Transverse colon (tissue), 4 donors: ENCODE measurements at regions of chr10 and their contacts with region 1.

Region 1: GRCh38 chr10:109883859-109884771 is 39.2 kb downstream of the XPNPEP1 start:
- DNase-seq: peak; percentile 51
- H3K4me3 ChIP-seq: no peak overlapping the region
- H3K27ac ChIP-seq: peak overlapping the region in 3 of 4 donors; percentile 15 to 50 (median 38)
- H3K4me1 ChIP-seq: peaks cover 0 to 13% (median 7%) of the 10 kb centered on the region in 4 donors
- H3K27me3 ChIP-seq: no peaks in the 10 kb centered on the region
- CTCF ChIP-seq: peak; percentile 94 to 96 (median 94)
- EP300 ChIP-seq: no peak
- POLR2A ChIP-seq: no peak

Region 2: GRCh38 chr10:109978481-109978880 is 94.4 kb after region 1 on chr10:
- in situ Hi-C with region 1: loop called in 1 of 4 experiments (anchors 25 kb)
- intact Hi-C with region 1: no loop called
- DNase-seq: peak; percentile 76
- H3K4me3 ChIP-seq: no peak overlapping the region
- H3K27ac ChIP-seq: peak overlapping the region; percentile 72 to 79 (median 76)
- H3K4me1 ChIP-seq: peaks cover 0 to 58% (median 25%) of the 10 kb centered on the region in 4 donors
- H3K27me3 ChIP-seq: no peaks in the 10 kb centered on the region
- CTCF ChIP-seq: peak; percentile 60 to 80 (median 69)
- EP300 ChIP-seq: no peak
- POLR2A ChIP-seq: no peak

Region 3: GRCh38 chr10:110101464-110102144 is 217.5 kb after region 1 on chr10:
- in situ Hi-C with region 1: loop called in 1 of 4 experiments (anchors 25 kb)
- intact Hi-C with region 1: no loop called
- DNase-seq: no peak
- H3K4me3 ChIP-seq: no peak overlapping the region
- H3K27ac ChIP-seq: no peak overlapping the region
- H3K4me1 ChIP-seq: no peaks in the 10 kb centered on the region
- H3K27me3 ChIP-seq: no peaks in the 10 kb centered on the region
- CTCF ChIP-seq: no peak
- EP300 ChIP-seq: no peak
- POLR2A ChIP-seq: no peak

Region 4: DNA sequence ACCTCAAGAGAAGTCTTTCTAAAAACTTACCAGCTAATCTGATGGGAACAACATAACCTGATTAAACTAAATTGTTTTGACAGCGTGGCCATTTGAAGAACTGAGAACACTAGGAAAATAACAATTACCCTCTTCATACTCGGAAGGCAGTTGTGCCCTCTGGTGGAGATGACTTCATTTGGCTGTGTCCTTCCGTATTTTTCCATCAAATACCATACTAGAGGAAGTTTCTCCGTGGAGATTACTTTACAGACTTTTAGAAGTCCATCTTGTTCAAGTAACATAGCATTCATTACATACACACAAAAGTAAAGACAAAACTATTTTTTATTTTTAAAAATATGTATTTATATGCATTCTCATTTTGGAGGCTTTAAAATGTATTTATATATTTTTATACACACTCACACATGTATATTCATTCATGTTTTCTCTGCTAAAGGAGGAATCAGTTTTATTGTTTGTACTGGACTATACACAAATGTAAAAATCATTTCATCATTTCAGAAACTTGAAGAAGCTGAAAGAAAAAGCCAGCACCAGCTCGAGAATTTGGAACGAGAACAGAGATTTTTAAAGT is 395.4 kb after region 1 on chr10:
- in situ Hi-C with region 1: loop called in 2 of 4 experiments (anchors 10 to 25 kb)
- intact Hi-C with region 1: loop called (anchors 10 kb)
- DNase-seq: peak; percentile 55
- H3K4me3 ChIP-seq: no peak overlapping the region
- H3K27ac ChIP-seq: no peak overlapping the region
- H3K4me1 ChIP-seq: peaks cover 0 to 10% (median 0%) of the 10 kb centered on the region in 4 donors
- H3K27me3 ChIP-seq: no peaks in the 10 kb centered on the region
- CTCF ChIP-seq: peak; percentile 69 to 84 (median 70)
- EP300 ChIP-seq: no peak
- POLR2A ChIP-seq: no peak

Region 5: DNA sequence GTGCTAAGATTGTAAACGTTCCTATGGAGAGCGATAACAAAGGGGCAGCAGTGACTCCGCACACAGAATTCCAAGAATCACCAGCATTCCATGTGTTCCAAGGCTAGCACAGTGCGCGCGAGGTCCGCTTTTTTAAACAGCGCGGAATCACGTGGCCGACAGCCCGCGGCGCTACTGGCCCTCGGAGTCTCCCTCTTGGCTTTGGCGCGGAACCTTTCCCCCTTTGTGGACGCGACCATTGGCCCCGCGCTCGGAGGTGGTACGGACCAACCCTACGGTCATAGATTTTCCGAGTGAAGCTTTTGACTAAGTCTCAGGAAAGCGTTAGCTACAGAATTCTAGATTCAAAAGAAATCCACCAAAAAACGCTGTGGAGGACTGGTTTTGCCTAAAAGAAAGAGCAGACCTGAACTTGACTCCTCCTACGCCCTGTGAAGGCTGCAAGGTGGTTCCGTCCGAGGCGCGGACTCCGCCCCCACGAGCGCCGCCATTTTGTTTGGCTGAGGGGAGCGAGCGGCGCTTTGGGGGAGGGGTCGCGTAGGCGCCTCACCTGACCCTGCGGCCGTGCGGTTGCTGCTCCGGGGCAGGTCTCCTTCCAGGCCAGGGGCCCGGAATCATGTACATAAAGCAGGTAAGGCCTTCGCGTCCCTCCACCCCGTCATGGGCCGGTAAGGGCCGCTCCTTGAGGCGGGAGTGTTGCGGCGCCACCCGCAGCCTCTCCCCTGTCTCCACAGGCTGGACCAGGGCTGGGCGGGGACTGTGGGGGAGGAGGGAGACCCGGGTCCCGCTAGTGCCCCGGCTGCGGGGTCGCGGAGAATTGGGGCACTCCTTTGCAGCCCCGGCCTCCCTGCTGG is 683.3 kb after region 1 on chr10 and contains the start of gene SMC3:
- in situ Hi-C with region 1: loop called in 1 of 4 experiments (anchors 25 kb)
- intact Hi-C with region 1: no loop called
- DNase-seq: peak; percentile 91
- H3K4me3 ChIP-seq: peak within 1 kb of the TSS; percentile 79 to 94 (median 83)
- H3K27ac ChIP-seq: peak within 1 kb of the TSS; percentile 90 to 95 (median 92)
- H3K4me1 ChIP-seq: peaks cover 8 to 40% (median 15%) of the 10 kb centered on the region in 4 donors
- H3K27me3 ChIP-seq: peaks cover 9% of the 10 kb centered on the region
- CTCF ChIP-seq: peak in 1 of 5 experiments; percentile 13
- EP300 ChIP-seq: no peak
- POLR2A ChIP-seq: peak; percentile 52
- total RNA-seq, gene SMC3: 16.8 to 31.9 (median 21.1) TPM

Region 6: DNA sequence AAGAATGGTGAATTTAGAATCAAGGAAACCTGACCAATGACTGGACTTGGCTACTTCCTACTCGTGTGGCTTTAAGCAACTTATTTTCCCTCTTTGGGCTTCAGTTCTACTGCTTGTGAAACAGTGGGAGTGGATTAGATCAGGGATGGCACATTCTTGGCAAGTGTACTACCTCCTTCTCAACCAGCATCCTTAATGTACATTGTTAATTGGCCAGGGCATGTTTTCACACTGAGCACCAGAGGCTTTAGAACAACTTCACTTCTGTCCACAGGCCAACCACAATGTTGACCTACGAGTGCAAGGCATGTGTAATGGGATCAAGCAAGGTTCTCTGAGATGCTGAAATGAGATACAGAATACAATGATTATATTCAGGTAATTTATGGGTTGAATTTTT is 1508.0 kb after region 1 on chr10:
- in situ Hi-C with region 1: no loop called
- intact Hi-C with region 1: no loop called
- DNase-seq: no peak
- H3K4me3 ChIP-seq: no peak overlapping the region
- H3K27ac ChIP-seq: no peak overlapping the region
- H3K4me1 ChIP-seq: no peaks in the 10 kb centered on the region
- H3K27me3 ChIP-seq: no peaks in the 10 kb centered on the region
- CTCF ChIP-seq: no peak
- EP300 ChIP-seq: no peak
- POLR2A ChIP-seq: no peak